Endothelial cell of umbilical vein (primary cell): ENCODE measurements at regions of chr3 and their contacts with region 1.

Region 1: GRCh38 chr3:120393243-120393642 is 44.1 kb upstream of the LRRC58 start:
- DNase-seq: peak; percentile 15
- H3K4me3 ChIP-seq: no peak overlapping the region
- H3K27ac ChIP-seq: no peak overlapping the region
- H3K4me1 ChIP-seq: no peaks in the 10 kb centered on the region
- H3K27me3 ChIP-seq: no peaks in the 10 kb centered on the region
- CTCF ChIP-seq: no peak
- POLR2A ChIP-seq: no peak

Region 2: DNA sequence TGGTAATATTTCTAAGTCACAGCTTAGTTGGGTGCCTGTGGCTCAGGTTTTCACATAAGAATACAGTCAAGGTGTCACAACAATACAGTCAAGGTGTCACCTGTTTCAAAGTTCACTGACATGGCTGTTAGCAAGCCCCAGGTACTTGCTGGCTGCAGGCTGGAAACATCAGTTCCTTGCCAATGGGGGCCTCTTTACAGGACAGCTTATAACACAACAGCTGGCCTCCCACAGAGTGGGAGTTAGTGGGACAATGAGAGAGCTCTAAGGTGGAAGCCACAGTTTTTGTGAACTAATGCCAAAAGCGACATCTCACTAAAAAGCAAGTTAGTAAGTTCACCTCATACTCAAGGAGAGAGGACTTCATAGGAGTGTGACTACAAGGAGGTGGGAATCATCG is 153.6 kb before region 1 on chr3:
- CTCF ChIA-PET with region 1: interaction called, 5 read pairs
- POLR2A ChIA-PET with region 1: no interaction called
- dilution Hi-C with region 1: no loop called
- intact Hi-C with region 1: loop called (anchors 5 kb)
- DNase-seq: no peak
- H3K4me3 ChIP-seq: no peak overlapping the region
- H3K27ac ChIP-seq: no peak overlapping the region
- H3K4me1 ChIP-seq: no peaks in the 10 kb centered on the region
- H3K27me3 ChIP-seq: peaks cover 9 to 27% of the 10 kb centered on the region in 2 experiments
- CTCF ChIP-seq: no peak
- POLR2A ChIP-seq: no peak